ENCODE measurements at regions of chr12 and their contacts with region 1.

Region 1: DNA sequence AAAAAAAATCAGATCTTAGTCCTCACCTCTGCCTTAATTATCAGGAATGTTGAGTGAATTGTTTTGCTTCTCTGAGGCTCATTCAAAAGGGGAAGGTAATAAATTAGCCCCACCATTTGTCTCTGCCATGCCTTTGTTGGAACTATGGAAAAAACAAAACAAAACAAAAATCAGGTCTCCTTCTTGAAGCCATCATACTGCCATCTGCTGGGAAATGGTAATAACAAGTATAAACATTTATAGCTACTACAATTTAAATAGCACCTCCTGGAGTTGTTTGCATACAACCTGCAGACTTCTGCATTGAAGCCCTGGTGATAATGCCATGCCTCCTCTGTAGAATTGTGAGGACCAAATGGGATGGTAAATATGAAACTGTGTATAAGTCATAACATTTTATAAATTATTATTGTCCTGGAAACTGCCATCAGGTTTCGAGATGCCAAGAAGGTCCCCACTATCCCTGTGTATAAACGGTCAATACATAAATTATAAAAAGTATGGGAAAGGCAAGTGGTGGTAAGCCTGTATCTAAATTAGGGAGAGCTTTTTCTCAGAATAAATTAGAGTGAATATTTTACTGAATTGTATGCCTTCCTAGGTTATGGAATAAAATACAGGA is 87.2 kb upstream of the FGD4 start:
- DNase-seq: peak; percentile 21
- ATAC-seq: peak; percentile 77
- H3K4me3 ChIP-seq: no peak overlapping the region
- H3K27ac ChIP-seq: no peak overlapping the region
- H3K4me1 ChIP-seq: no peaks in the 10 kb centered on the region
- H3K27me3 ChIP-seq: no peaks in the 10 kb centered on the region
- CTCF ChIP-seq: peak; percentile 39 to 63 (median 56); a peak in 5 of 6 replicates
- EP300 ChIP-seq: no peak
- POLR2A ChIP-seq: no peak
- RAD21 ChIP-seq: peak; percentile 62

Region 2: GRCh38 chr12:31659087-31659933 is 652.9 kb before region 1 on chr12 and contains the start of gene ETFBKMT:
- CTCF ChIA-PET with region 1: interaction called, 74 read pairs
- POLR2A ChIA-PET with region 1: no interaction called
- RAD21 ChIA-PET with region 1: interaction called, 52 read pairs
- SMC1A ChIA-PET with region 1: interaction called, 46 read pairs
- in situ Hi-C with region 1: loop called (anchors 5 kb)
- intact Hi-C with region 1: no loop called
- DNase-seq: peak; percentile 90
- ATAC-seq: peak; percentile 99
- H3K4me3 ChIP-seq: peak within 1 kb of the TSS; percentile 85
- H3K27ac ChIP-seq: peak within 1 kb of the TSS; percentile 87
- H3K4me1 ChIP-seq: peaks cover 5% of the 10 kb centered on the region; the same call in 1 of the 2 replicates
- H3K27me3 ChIP-seq: no peaks in the 10 kb centered on the region
- CTCF ChIP-seq: peak; percentile 18 to 34 (median 22); a peak in 4 of 6 replicates
- EP300 ChIP-seq: no peak
- POLR2A ChIP-seq: peak; percentile 54; the same call in 1 of the 2 replicates
- RAD21 ChIP-seq: no peak
- polyA plus RNA-seq, gene ETFBKMT: 0.49 to 0.79 TPM

Region 3: GRCh38 chr12:32062881-32063280 is 249.3 kb before region 1 on chr12:
- CTCF ChIA-PET with region 1: interaction called, 39 read pairs
- POLR2A ChIA-PET with region 1: no interaction called
- RAD21 ChIA-PET with region 1: interaction called, 17 read pairs
- SMC1A ChIA-PET with region 1: interaction called, 52 read pairs
- in situ Hi-C with region 1: loop called (anchors 5 kb)
- intact Hi-C with region 1: loop called (anchors 1 kb)
- DNase-seq: no peak
- ATAC-seq: peak; percentile 45
- H3K4me3 ChIP-seq: no peak overlapping the region
- H3K27ac ChIP-seq: no peak overlapping the region
- H3K4me1 ChIP-seq: peaks cover 2% of the 10 kb centered on the region; the same call in 1 of the 2 replicates
- H3K27me3 ChIP-seq: no peaks in the 10 kb centered on the region
- CTCF ChIP-seq: 0 out of 6 replicates have a peak, but pooled peaks of 1 of the 3 experiments have one; percentile 3
- EP300 ChIP-seq: no peak
- POLR2A ChIP-seq: no peak
- RAD21 ChIP-seq: no peak

Region 4: DNA sequence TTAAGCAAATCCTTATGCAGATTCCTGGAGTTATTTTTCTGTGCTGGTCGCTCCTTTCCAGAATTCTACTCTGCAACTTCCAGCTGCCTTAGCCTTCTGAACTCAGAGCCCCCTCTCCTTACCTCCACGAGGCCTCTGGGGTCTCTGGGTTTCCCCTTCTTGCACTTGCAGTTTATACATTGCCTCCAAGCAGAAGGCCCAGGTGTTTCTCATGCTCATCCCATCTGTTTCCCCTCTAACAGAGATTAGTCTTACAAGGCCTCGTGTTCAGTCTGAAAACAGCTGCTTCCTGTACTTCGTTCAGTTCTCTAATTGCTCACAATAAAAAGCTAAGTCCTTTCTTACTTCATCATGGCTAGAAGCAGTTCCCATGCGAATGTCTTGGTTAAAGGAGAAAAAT is 47.2 kb before region 1 on chr12:
- CTCF ChIA-PET with region 1: interaction called, 10 read pairs
- POLR2A ChIA-PET with region 1: no interaction called
- RAD21 ChIA-PET with region 1: interaction called, 5 read pairs
- SMC1A ChIA-PET with region 1: interaction called, 4 read pairs
- in situ Hi-C with region 1: no loop called
- intact Hi-C with region 1: loop called (anchors 5 kb)
- DNase-seq: no peak
- ATAC-seq: peak; percentile 50
- H3K4me3 ChIP-seq: no peak overlapping the region
- H3K27ac ChIP-seq: peak overlapping the region; percentile 64
- H3K4me1 ChIP-seq: peaks cover 11% of the 10 kb centered on the region
- H3K27me3 ChIP-seq: no peaks in the 10 kb centered on the region
- CTCF ChIP-seq: no peak
- EP300 ChIP-seq: no peak
- POLR2A ChIP-seq: no peak
- RAD21 ChIP-seq: no peak

Region 5: GRCh38 chr12:32322354-32322753 is 10.2 kb after region 1 on chr12:
- CTCF ChIA-PET with region 1: interaction called, 20 read pairs
- POLR2A ChIA-PET with region 1: no interaction called
- RAD21 ChIA-PET with region 1: interaction called, 3 read pairs
- SMC1A ChIA-PET with region 1: interaction called, 7 read pairs
- in situ Hi-C with region 1: no loop called
- intact Hi-C with region 1: no loop called
- DNase-seq: no peak
- ATAC-seq: no peak
- H3K4me3 ChIP-seq: no peak overlapping the region
- H3K27ac ChIP-seq: no peak overlapping the region
- H3K4me1 ChIP-seq: no peaks in the 10 kb centered on the region
- H3K27me3 ChIP-seq: no peaks in the 10 kb centered on the region
- CTCF ChIP-seq: no peak
- EP300 ChIP-seq: no peak
- POLR2A ChIP-seq: no peak
- RAD21 ChIP-seq: no peak